Right ventricle myocardium superior (tissue), 1 donor: ENCODE measurements at regions of chr13 and their contacts with region 1.

Region 1: GRCh38 chr13:32586080-32586900 is at the start of gene PDS5B:
- DNase-seq: peak; percentile 96
- ATAC-seq: peak; percentile 99
- total RNA-seq, gene PDS5B: 22.9 TPM

Region 2: GRCh38 chr13:32639502-32640105 is 53.3 kb after region 1 on chr13:
- intact Hi-C with region 1: loop called (anchors 2 kb)
- DNase-seq: peak; percentile 54
- ATAC-seq: peak; percentile 94

Region 3: DNA sequence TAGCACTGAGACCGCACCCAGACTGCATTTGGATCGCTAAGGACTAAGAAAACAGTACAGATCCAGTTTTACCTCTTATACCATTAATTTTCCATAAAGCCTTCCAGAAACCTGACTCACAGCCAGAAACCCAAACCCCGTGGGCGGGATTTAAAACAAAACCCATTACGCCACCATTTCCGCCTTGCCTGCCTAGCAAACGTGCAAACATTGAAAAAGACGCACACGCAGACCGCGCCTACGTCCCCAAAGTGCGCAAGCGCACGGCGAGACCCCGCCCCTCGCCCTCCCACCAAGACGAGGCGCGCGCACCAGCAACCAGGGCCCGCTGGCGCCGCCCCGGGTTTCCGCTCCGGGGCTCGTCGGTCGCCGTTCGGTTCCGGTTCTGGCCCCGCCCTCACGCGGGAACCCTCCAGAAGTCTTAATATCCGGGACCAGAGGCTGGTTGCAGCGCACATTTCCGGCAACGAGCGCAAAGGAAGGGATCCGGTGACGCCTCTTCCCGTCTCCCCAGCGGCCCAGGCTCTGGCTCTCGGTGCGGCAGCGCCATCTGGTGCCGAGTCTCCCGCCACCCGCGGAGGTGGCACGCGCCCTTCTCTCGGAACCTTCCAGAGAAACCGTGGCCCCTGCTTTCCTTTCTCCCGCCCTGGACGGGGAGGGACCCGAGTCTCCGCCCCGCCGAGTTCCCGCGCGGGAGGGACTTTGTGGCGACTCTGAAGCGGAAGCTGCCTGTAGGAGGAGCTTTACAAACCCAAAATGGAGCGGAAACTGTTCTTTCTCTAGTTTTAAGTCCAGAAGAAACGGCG is 956.2 kb after region 1 on chr13:
- intact Hi-C with region 1: loop called (anchors 5 kb)
- DNase-seq: peak; percentile 99
- ATAC-seq: peak; percentile 95